ENCODE measurements at regions of chr1 and their contacts with region 1.

Region 1: GRCh38 chr1:9494929-9495758 is 44.1 kb upstream of the SLC25A33 start:
- DNase-seq: peak; percentile 69
- H3K4me3 Mint-ChIP-seq: peak overlapping the region; percentile 68
- H3K27ac Mint-ChIP-seq: no peak overlapping the region
- H3K4me1 Mint-ChIP-seq: peaks cover 3% of the 10 kb centered on the region
- H3K27me3 Mint-ChIP-seq: peaks cover 2% of the 10 kb centered on the region

Region 2: GRCh38 chr1:9110669-9111356 is 384.3 kb before region 1 on chr1:
- CTCF ChIA-PET with region 1: no interaction called
- intact Hi-C with region 1: loop called (anchors 2 kb)
- DNase-seq: peak; percentile 92
- H3K4me3 Mint-ChIP-seq: no peak overlapping the region
- H3K27ac Mint-ChIP-seq: no peak overlapping the region
- H3K4me1 Mint-ChIP-seq: no peaks in the 10 kb centered on the region
- H3K27me3 Mint-ChIP-seq: no peaks in the 10 kb centered on the region

Region 3: DNA sequence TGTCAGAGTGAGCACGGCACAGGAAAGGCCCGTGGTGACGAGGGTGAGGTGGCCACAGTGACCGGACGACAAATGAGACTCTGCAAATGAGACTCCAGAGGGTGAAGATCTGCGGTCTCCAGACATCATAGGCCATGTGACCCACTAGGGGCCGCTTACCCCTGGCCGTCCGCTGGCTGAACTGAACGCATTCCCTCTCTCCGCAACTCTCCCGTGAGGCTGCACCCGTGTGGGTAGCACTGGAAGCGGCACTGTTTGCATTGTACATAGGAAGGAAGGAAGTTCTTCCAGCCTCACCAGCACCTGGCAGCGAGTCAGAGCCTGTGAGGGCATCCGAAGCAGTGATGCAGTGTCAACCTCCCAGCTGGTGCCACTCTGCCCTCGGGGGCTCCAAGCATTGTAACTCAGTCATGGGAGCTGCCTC is 226.1 kb before region 1 on chr1:
- CTCF ChIA-PET with region 1: interaction called, 7 read pairs
- intact Hi-C with region 1: loop called (anchors 1 kb)
- DNase-seq: no peak
- H3K4me3 Mint-ChIP-seq: no peak overlapping the region
- H3K27ac Mint-ChIP-seq: no peak overlapping the region
- H3K4me1 Mint-ChIP-seq: peaks cover 3% of the 10 kb centered on the region
- H3K27me3 Mint-ChIP-seq: no peaks in the 10 kb centered on the region

Region 4: GRCh38 chr1:9292361-9293240 is 202.5 kb before region 1 on chr1 and contains the start of gene SPSB1:
- CTCF ChIA-PET with region 1: interaction called, 64 read pairs
- intact Hi-C with region 1: loop called (anchors 1 kb)
- DNase-seq: peak; percentile 73
- H3K4me3 Mint-ChIP-seq: peak within 1 kb of the TSS; percentile 31
- H3K27ac Mint-ChIP-seq: no peak within 1 kb of the TSS
- H3K4me1 Mint-ChIP-seq: peaks cover 23% of the 10 kb centered on the region
- H3K27me3 Mint-ChIP-seq: no peaks in the 10 kb centered on the region
- total RNA-seq, gene SPSB1: 4.8 to 5.0 TPM

Region 5: DNA sequence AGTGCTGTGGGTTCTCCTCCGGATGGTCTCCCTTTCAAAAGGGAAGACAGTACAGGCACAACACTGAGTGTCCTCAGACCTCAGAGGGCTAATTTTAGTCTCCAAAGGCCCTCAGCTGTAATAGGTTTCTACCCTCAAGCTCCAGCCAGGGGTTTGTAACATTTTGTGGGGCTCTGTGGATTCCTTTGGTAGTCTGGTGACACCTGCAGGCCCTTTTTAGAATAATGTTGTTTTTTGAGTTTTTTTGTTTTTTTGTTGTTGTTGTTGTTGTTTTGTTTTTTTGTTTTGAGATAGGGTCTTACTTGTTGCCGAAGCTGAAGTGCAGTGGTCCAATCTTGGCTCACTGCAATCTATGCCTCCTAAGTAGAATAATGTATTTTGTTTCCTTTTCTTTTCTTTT is 78.6 kb after region 1 on chr1:
- CTCF ChIA-PET with region 1: interaction called, 25 read pairs
- intact Hi-C with region 1: loop called (anchors 1 kb)
- DNase-seq: no peak
- H3K4me3 Mint-ChIP-seq: no peak overlapping the region
- H3K27ac Mint-ChIP-seq: no peak overlapping the region
- H3K4me1 Mint-ChIP-seq: no peaks in the 10 kb centered on the region
- H3K27me3 Mint-ChIP-seq: no peaks in the 10 kb centered on the region

Region 6: GRCh38 chr1:9867408-9868243 is 372.5 kb after region 1 on chr1:
- CTCF ChIA-PET with region 1: no interaction called
- intact Hi-C with region 1: loop called (anchors 5 kb)
- DNase-seq: peak; percentile 95
- H3K4me3 Mint-ChIP-seq: no peak overlapping the region
- H3K27ac Mint-ChIP-seq: no peak overlapping the region
- H3K4me1 Mint-ChIP-seq: no peaks in the 10 kb centered on the region
- H3K27me3 Mint-ChIP-seq: no peaks in the 10 kb centered on the region